ENCODE measurements at regions of chr1 and their contacts with region 1.

Region 1: GRCh38 chr1:39609618-39610331 is 29.7 kb downstream of the HEYL start:
- DNase-seq: peak; percentile 81
- ATAC-seq: peak; percentile 83 to 84

Region 2: GRCh38 chr1:39653546-39654031 is 43.8 kb after region 1 on chr1:
- intact Hi-C with region 1: loop called (anchors 2 kb)
- DNase-seq: peak; percentile 84
- ATAC-seq: peak; percentile 68 to 69